Heart left ventricle (tissue), 16 donors: ENCODE measurements at regions of chr14 and their contacts with region 1.

Region 1: GRCh38 chr14:103391048-103391447 is 5.8 kb downstream of the MARK3 start:
- DNase-seq: peak in 1 of 5 donors; percentile 19
- ATAC-seq: peak in 3 of 4 donors; percentile 7 to 24 (median 17)
- H3K4me3 ChIP-seq: no peak overlapping the region
- H3K27ac ChIP-seq: peak overlapping the region in 1 of 12 donors; percentile 27
- H3K4me1 ChIP-seq: peaks cover 10 to 80% (median 73%) of the 10 kb centered on the region in 12 donors
- H3K27me3 ChIP-seq: no peaks in the 10 kb centered on the region
- CTCF ChIP-seq: peak; percentile 30 to 76 (median 56)
- POLR2A ChIP-seq: no peak

Region 2: DNA sequence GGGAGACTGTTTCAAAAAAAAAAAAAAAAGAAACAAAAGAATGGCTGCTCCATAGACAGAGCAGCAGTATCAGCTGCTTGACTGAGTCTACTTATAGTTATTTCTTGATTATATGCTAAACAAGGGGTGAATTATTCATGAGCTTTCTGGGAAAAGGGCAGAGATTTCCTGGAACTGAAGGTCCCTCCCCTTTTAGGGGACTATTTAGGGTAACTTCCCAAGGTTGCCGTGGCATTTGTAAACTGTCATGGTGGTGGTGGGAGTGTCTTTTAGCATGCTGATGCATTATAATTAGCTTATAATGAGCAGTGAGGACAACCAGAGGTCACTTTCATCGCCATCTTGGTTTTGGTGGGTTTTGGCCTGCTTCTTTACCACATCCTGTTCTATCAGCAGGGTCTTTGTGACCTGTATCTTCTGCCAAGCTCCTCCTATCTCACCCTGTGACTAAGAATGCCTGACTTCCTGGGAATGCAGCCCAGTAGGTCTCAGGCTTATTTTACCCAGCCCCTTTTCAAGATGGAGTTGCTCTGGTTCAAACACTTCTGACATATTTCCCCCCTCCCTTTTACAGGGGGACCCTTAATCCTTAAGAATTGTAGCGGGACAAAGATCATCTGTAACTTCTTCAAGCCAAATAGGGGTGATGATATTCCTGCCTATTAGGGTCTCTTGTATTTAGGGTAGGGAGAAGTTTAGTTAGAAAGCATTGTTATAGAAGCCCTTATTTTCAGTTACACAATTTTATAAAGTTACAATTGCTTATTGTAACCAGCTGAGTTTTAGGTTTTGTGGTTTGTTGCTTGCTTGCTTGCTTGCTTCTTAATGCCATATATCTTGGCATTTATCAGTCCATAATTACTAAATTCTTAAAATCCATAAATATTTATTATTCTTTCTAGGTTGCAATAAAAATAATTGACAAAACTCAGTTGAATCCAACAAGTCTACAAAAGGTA is 36.7 kb after region 1 on chr14:
- intact Hi-C with region 1: loop called in 2 of 10 experiments (anchors 5 kb)
- DNase-seq: peak in 2 of 5 donors; percentile 21 to 42
- ATAC-seq: peak; percentile 10 to 55 (median 53)
- H3K4me3 ChIP-seq: no peak overlapping the region
- H3K27ac ChIP-seq: peak overlapping the region in 9 of 12 donors; percentile 16 to 82 (median 41)
- H3K4me1 ChIP-seq: peaks cover 0 to 64% (median 28%) of the 10 kb centered on the region in 12 donors
- H3K27me3 ChIP-seq: no peaks in the 10 kb centered on the region
- CTCF ChIP-seq: no peak
- POLR2A ChIP-seq: no peak

Region 3: DNA sequence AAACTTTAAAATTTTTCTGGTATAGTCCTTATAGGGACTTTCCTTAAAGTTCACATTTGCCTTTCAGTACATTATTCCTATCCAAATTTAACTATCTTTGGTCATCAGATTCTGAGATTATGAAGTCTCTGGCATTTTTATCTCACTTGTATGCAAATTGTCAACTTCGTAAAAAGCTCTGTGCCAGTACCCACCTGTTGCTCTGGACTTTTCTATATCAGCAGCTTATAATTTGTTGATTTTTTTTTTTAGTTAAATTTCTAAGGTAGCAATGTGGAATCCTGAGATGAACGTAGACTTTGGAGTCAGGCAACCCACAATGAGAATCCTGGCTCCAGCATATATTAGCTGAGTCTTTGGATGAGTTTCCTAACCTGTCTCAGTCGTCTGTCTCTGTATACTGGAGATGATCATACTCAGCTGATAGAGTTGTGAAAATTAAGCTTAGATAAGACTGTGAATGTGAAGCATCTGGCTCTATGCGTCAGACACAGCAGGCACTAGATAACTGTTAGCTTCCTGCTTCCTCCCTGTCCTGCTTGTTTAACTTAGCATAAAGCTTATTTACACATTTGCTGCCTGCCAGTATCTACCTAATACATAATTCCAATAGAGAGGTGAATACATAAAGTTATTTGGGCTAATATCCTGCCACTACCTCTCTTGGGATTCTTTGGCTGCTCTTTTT is 53.9 kb after region 1 on chr14:
- intact Hi-C with region 1: loop called in 5 of 10 experiments (anchors 5 to 10 kb)
- DNase-seq: no peak
- ATAC-seq: peak; percentile 19 to 71 (median 62)
- H3K4me3 ChIP-seq: no peak overlapping the region
- H3K27ac ChIP-seq: peak overlapping the region in 3 of 12 donors; percentile 9 to 23 (median 12)
- H3K4me1 ChIP-seq: peaks cover 10 to 72% (median 41%) of the 10 kb centered on the region in 12 donors
- H3K27me3 ChIP-seq: no peaks in the 10 kb centered on the region
- CTCF ChIP-seq: no peak
- POLR2A ChIP-seq: no peak

Region 4: DNA sequence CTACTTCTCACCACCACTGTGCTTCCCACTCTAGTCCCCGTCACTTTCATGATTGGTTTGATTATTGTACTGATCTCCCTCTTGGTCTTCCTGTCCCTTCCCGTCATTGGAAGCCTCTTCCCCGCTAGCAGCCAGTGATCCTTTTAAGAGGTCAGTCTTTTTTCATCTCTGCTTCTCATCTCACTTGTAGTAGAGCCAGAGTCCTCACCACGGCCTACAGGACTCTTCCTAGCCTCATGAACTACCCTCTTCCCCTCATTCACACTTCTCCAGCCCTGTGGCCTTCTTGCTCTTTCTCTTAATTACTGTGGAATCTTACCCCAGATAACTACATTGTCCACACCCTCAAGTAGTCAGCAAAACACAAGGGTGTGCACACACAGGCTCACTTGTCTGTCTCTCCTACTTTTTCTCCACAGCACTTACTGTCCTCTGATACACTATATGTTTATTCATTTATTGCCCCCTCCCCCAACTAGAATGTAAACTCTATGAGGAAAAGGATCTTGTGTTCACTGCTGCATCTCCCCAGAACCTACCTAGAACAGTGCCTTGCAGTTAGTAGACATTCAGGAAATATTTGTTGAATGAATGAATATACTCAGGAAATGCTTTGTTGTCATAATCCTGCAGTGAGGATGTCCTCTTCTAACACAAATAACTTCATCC is 65.3 kb after region 1 on chr14:
- intact Hi-C with region 1: loop called in 2 of 10 experiments (anchors 10 kb)
- DNase-seq: no peak
- ATAC-seq: peak in 1 of 4 donors; percentile 22
- H3K4me3 ChIP-seq: no peak overlapping the region
- H3K27ac ChIP-seq: peak overlapping the region in 1 of 12 donors; percentile 0
- H3K4me1 ChIP-seq: peaks cover 0 to 13% (median 8%) of the 10 kb centered on the region in 12 donors
- H3K27me3 ChIP-seq: no peaks in the 10 kb centered on the region
- CTCF ChIP-seq: no peak
- POLR2A ChIP-seq: no peak

Region 5: DNA sequence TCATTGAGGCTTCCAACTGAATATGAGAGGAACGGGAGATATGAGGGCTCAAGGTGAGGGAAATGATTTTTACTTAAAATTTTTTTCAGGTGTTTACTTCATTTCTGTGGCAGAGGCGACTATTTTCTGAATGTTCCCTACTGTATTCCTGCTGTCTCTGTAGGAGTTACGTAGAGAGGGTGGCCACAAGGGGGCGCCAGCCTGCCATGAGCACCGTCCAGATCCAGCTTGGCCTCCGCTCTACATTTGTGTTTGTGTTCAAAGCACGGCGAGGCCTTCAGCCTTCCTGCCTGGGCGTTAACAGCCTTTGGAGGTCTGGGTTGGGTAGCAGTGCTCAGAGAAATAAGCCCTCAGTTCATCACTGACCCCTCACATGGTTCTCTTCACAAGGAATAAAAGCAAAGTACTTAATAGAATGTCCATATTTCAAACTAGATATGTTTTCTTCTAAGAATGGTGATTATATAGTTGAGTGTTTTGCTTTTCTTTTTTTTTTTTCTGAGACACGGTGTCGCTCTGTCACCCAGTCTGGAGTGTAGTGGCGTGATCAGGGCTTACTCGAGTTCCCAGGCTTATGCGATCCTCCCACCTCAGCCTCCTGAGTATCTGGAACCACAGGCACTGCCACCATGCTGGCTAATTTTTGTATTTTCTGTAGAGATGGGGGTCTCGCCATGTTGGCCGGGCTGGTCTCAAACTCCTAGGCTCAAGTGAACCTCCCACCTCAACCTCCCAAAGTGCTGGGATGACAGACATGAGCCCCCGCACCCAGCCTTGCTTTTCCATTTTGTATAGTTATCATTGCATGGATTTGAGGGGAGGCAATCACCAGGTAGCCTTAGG is 109.3 kb after region 1 on chr14:
- intact Hi-C with region 1: loop called in 1 of 10 experiments (anchors 10 kb)
- DNase-seq: peak; percentile 86 to 94 (median 88)
- ATAC-seq: peak; percentile 73 to 91 (median 86)
- H3K4me3 ChIP-seq: no peak overlapping the region
- H3K27ac ChIP-seq: peak overlapping the region in 6 of 12 donors; percentile 31 to 52 (median 42)
- H3K4me1 ChIP-seq: peaks cover 0 to 24% (median 13%) of the 10 kb centered on the region in 12 donors
- H3K27me3 ChIP-seq: no peaks in the 10 kb centered on the region
- CTCF ChIP-seq: peak in 11 of 12 donors; percentile 85 to 97 (median 94)
- POLR2A ChIP-seq: no peak